GM13976 (cell line): ENCODE measurements at regions of chr10 and their contacts with region 1.

Region 1: GRCh38 chr10:77173615-77174461 is 463.8 kb downstream of the KCNMA1 start:
- DNase-seq: peak; percentile 53
- CTCF ChIP-seq: peak; percentile 80

Region 2: DNA sequence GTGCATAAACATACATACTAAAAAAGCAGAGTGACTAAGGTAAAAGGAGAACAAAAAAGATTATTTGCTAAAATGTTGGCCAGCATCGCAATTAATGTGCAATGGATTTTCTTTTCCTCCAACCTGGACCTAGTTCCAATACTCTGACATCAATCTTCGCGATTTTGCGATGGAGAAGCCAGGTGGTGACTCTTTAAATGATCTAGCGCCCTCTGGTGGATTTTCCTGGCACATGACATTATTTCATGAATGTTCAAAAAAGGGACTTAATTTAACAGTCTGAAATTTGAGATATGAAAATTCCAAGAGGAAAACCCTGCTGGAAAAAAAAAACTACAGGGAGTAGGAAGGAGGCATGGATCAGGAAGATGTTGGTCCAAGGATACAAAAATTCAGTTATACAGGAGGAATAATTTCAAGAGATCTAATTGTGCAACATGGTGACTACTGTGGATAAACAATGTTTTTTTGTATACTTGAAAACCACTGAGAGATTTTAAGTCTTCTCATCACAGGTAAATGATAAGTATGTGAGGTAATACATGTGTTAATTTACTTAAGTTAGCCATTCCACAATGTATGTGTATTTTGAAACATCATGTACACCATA is 468.1 kb after region 1 on chr10:
- in situ Hi-C with region 1: loop called (anchors 10 kb)
- DNase-seq: peak; percentile 69
- CTCF ChIP-seq: peak; percentile 55